IMR-90 (cell line): ENCODE measurements at regions of chr2 and their contacts with region 1.

Region 1: GRCh38 chr2:20781656-20782265 is 41.1 kb downstream of the LDAH start:
- DNase-seq: peak; percentile 7
- ATAC-seq: peak; percentile 48; the same call in 1 of the 2 replicates
- H3K4me3 ChIP-seq: no peak overlapping the region
- H3K27ac ChIP-seq: no peak overlapping the region
- H3K4me1 ChIP-seq: no peaks in the 10 kb centered on the region
- H3K27me3 ChIP-seq: no peaks in the 10 kb centered on the region
- CTCF ChIP-seq: peak; percentile 50
- POLR2A ChIP-seq: no peak
- RAD21 ChIP-seq: peak; percentile 50

Region 2: GRCh38 chr2:20657522-20658235 is 124.1 kb before region 1 on chr2:
- CTCF ChIA-PET with region 1: no interaction called
- POLR2A ChIA-PET with region 1: no interaction called
- dilution Hi-C with region 1: no loop called
- in situ Hi-C with region 1: no loop called
- intact Hi-C with region 1: no loop called
- DNase-seq: no peak
- ATAC-seq: no peak
- H3K4me3 ChIP-seq: no peak overlapping the region
- H3K27ac ChIP-seq: no peak overlapping the region
- H3K4me1 ChIP-seq: peaks cover 2% of the 10 kb centered on the region; the same call in 1 of the 2 replicates
- H3K27me3 ChIP-seq: peaks cover 53% of the 10 kb centered on the region
- CTCF ChIP-seq: no peak
- POLR2A ChIP-seq: no peak
- RAD21 ChIP-seq: no peak

Region 3: DNA sequence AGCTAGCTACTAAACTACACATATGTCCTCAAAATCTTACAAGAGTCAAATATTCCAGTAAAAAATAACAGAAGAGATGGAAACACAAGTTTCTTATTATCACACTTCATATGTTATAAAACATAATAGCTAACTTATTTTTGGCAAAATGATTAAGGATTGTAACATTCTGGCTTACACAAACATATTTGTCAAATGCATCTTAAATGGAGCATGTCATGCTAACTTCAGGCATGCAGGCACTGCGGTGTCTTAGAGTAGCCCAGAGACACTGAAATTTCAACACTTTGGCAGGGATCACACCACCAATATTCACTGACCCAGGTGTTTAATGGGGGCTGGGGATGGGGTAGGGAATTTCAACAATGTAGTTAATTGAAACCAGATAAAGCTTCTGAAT is 10.5 kb before region 1 on chr2:
- CTCF ChIA-PET with region 1: interaction called, 12 read pairs
- POLR2A ChIA-PET with region 1: no interaction called
- dilution Hi-C with region 1: no loop called
- in situ Hi-C with region 1: no loop called
- intact Hi-C with region 1: no loop called
- DNase-seq: no peak
- ATAC-seq: no peak
- H3K4me3 ChIP-seq: no peak overlapping the region
- H3K27ac ChIP-seq: no peak overlapping the region
- H3K4me1 ChIP-seq: 0 out of 2 replicates have a peak, but pooled peaks cover 2% of the 10 kb centered on the region
- H3K27me3 ChIP-seq: no peaks in the 10 kb centered on the region
- CTCF ChIP-seq: no peak
- POLR2A ChIP-seq: no peak
- RAD21 ChIP-seq: no peak

Region 4: GRCh38 chr2:20962939-20963557 is 181.3 kb after region 1 on chr2:
- CTCF ChIA-PET with region 1: no interaction called
- POLR2A ChIA-PET with region 1: no interaction called
- dilution Hi-C with region 1: no loop called
- in situ Hi-C with region 1: no loop called
- intact Hi-C with region 1: loop called (anchors 1 kb)
- DNase-seq: peak; percentile 48
- ATAC-seq: peak; percentile 91
- H3K4me3 ChIP-seq: no peak overlapping the region
- H3K27ac ChIP-seq: no peak overlapping the region
- H3K4me1 ChIP-seq: no peaks in the 10 kb centered on the region
- H3K27me3 ChIP-seq: peaks cover 14% of the 10 kb centered on the region
- CTCF ChIP-seq: peak; percentile 85
- POLR2A ChIP-seq: no peak
- RAD21 ChIP-seq: peak; percentile 79